Endothelial cell of umbilical vein (primary cell): ENCODE measurements at regions of chr2 and their contacts with region 1.

Region 1: GRCh38 chr2:13006829-13007717 is 290.3 kb downstream of the TRIB2 start:
- DNase-seq: peak; percentile 83
- H3K4me3 ChIP-seq: no peak overlapping the region
- H3K27ac ChIP-seq: no peak overlapping the region
- H3K4me1 ChIP-seq: peaks cover 19% of the 10 kb centered on the region
- H3K27me3 ChIP-seq: peaks cover 0 to 3% of the 10 kb centered on the region in 2 experiments
- CTCF ChIP-seq: peak; percentile 63 to 71
- POLR2A ChIP-seq: no peak

Region 2: DNA sequence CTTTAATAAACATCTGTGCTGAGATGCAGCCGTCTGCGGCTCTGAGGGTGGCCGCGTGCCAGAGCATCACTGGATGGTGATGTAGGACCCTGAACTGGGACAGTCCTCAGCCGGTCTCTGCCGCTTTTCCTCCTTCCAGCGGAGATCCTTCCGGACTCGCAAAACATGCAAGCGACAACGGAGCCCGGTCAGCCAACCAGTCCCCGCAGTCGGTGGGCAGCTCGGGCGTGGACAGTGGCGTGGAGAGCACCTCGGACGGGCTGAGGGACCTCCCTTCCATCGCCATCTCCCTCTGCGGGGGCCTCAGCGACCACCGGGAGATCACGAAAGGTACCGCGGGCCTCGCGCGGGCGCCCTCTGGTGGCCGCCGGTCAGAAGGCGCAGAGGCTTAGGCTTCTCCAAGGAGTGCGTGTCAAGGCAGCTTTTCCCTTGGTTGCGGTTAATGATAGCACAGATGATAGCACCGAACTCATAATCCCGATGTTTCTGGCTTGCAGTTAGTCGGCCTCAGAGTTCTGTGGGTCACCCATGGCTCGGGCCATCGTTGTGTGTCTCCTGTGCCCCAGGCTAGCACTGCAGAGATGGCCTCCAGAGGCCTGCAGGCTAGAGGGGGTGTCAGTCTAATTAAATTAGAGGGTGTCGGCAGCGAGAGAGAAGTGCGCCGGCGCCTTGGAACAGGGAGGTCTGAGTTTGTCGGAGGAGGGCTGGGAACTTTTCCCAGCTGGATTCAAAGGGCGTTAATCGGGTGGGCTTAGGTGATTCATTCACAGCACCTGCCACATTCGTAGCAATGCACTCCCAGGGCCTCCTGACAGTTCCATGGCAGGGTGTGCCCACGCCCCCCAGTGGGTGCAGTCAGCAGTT is 1222.1 kb before region 1 on chr2:
- CTCF ChIA-PET with region 1: interaction called, 13 read pairs
- POLR2A ChIA-PET with region 1: no interaction called
- dilution Hi-C with region 1: no loop called
- intact Hi-C with region 1: no loop called
- DNase-seq: peak; percentile 49
- H3K4me3 ChIP-seq: peak overlapping the region in 1 of 3 experiments; percentile 26
- H3K27ac ChIP-seq: no peak overlapping the region
- H3K4me1 ChIP-seq: no peaks in the 10 kb centered on the region
- H3K27me3 ChIP-seq: no peaks in the 10 kb centered on the region
- CTCF ChIP-seq: peak; percentile 94 to 99
- POLR2A ChIP-seq: no peak

Region 3: DNA sequence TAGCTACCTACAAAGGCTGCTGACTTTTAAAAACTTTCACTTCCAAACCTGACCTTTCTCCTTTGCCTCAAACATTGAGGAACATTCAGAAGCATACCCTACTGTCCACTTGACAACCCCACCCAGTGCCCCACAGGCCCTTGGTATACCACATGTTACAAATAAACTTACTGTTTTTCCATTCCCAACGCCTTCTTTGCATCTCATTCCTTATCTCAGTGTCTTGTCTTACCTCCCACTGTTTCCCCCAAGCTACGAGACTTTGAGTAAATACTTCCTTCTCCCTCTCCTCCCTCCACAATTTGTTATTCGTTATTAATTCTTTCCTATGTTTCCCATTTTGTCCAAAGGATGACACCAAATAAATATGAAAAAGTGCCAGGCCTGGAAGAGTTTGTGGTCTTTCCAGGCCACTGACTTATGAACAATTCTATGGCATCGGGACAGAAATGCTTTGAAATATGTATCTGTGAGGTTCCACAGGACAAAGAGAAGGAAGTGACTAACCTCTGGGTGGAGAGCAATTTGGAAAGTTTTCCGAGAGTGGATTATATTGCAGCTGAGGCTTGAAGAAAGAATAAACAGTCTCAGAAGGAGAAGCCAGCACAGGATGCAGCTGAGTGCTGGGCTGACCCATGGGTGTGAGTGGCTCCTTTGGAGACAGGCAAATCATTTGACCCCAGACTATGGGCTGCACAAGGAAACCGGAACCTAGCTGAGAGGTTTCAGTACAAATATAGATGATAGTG is 851.6 kb before region 1 on chr2:
- CTCF ChIA-PET with region 1: interaction called, 6 read pairs
- POLR2A ChIA-PET with region 1: no interaction called
- dilution Hi-C with region 1: no loop called
- intact Hi-C with region 1: loop called (anchors 5 kb)
- DNase-seq: peak; percentile 97
- H3K4me3 ChIP-seq: no peak overlapping the region
- H3K27ac ChIP-seq: peak overlapping the region; percentile 85
- H3K4me1 ChIP-seq: peaks cover 21% of the 10 kb centered on the region
- H3K27me3 ChIP-seq: peaks cover 0 to 2% of the 10 kb centered on the region in 2 experiments
- CTCF ChIP-seq: no peak
- POLR2A ChIP-seq: peak; percentile 36

Region 4: GRCh38 chr2:12430407-12431133 is 576.5 kb before region 1 on chr2:
- CTCF ChIA-PET with region 1: interaction called, 18 read pairs
- POLR2A ChIA-PET with region 1: no interaction called
- dilution Hi-C with region 1: no loop called
- intact Hi-C with region 1: no loop called
- DNase-seq: no peak
- H3K4me3 ChIP-seq: no peak overlapping the region
- H3K27ac ChIP-seq: no peak overlapping the region
- H3K4me1 ChIP-seq: no peaks in the 10 kb centered on the region
- H3K27me3 ChIP-seq: no peaks in the 10 kb centered on the region
- CTCF ChIP-seq: no peak
- POLR2A ChIP-seq: no peak

Region 5: GRCh38 chr2:12787891-12788801 is 218.9 kb before region 1 on chr2:
- CTCF ChIA-PET with region 1: interaction called, 5 read pairs
- POLR2A ChIA-PET with region 1: no interaction called
- dilution Hi-C with region 1: no loop called
- intact Hi-C with region 1: loop called (anchors 2 kb)
- DNase-seq: peak; percentile 96
- H3K4me3 ChIP-seq: peak overlapping the region in 1 of 3 experiments; percentile 51
- H3K27ac ChIP-seq: peak overlapping the region; percentile 99
- H3K4me1 ChIP-seq: peaks cover 20% of the 10 kb centered on the region
- H3K27me3 ChIP-seq: no peaks in the 10 kb centered on the region
- CTCF ChIP-seq: no peak
- POLR2A ChIP-seq: no peak

Region 6: DNA sequence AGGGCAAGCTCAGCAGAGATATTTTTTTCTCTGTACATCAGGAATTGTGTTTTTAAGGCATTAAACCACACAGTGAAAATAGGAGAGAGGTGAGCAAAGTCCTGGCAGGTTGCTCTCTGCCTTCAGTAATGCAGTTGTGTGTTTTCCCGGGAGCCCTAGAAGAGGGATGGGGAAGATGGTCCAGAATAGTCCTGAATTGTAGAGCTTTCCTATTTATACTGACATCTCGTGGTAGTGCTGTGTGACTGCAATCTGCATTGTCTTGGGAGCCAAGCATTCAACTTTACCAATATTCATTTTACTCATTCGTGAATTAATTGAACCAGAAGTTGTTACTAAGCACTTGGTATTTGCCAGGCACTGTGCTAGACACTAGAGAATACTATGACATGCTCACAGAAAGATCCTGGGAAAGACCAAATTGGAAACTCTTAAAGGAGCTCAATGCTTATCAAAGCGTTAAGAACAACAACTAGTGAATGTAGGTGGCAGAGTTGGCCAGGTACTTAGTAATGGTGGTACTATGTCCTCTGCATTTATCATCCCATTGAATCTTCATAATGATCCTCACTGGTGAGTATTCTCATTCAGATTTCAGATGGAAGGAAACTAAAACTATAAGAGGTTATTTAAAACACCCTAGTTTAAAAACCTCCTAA is 75.8 kb before region 1 on chr2:
- CTCF ChIA-PET with region 1: interaction called, 86 read pairs
- POLR2A ChIA-PET with region 1: no interaction called
- dilution Hi-C with region 1: no loop called
- intact Hi-C with region 1: loop called (anchors 1 kb)
- DNase-seq: peak; percentile 59
- H3K4me3 ChIP-seq: no peak overlapping the region
- H3K27ac ChIP-seq: no peak overlapping the region
- H3K4me1 ChIP-seq: peaks cover 9% of the 10 kb centered on the region
- H3K27me3 ChIP-seq: no peaks in the 10 kb centered on the region
- CTCF ChIP-seq: peak; percentile 74 to 78
- POLR2A ChIP-seq: no peak

Region 7: GRCh38 chr2:12982149-12982584 is 24.9 kb before region 1 on chr2:
- CTCF ChIA-PET with region 1: interaction called, 10 read pairs
- POLR2A ChIA-PET with region 1: no interaction called
- dilution Hi-C with region 1: no loop called
- intact Hi-C with region 1: loop called (anchors 1 kb)
- DNase-seq: peak; percentile 90
- H3K4me3 ChIP-seq: no peak overlapping the region
- H3K27ac ChIP-seq: peak overlapping the region; percentile 50
- H3K4me1 ChIP-seq: peaks cover 28% of the 10 kb centered on the region
- H3K27me3 ChIP-seq: no peaks in the 10 kb centered on the region
- CTCF ChIP-seq: no peak
- POLR2A ChIP-seq: no peak